ENCODE measurements at regions of chr9 and their contacts with region 1.

Region 1: DNA sequence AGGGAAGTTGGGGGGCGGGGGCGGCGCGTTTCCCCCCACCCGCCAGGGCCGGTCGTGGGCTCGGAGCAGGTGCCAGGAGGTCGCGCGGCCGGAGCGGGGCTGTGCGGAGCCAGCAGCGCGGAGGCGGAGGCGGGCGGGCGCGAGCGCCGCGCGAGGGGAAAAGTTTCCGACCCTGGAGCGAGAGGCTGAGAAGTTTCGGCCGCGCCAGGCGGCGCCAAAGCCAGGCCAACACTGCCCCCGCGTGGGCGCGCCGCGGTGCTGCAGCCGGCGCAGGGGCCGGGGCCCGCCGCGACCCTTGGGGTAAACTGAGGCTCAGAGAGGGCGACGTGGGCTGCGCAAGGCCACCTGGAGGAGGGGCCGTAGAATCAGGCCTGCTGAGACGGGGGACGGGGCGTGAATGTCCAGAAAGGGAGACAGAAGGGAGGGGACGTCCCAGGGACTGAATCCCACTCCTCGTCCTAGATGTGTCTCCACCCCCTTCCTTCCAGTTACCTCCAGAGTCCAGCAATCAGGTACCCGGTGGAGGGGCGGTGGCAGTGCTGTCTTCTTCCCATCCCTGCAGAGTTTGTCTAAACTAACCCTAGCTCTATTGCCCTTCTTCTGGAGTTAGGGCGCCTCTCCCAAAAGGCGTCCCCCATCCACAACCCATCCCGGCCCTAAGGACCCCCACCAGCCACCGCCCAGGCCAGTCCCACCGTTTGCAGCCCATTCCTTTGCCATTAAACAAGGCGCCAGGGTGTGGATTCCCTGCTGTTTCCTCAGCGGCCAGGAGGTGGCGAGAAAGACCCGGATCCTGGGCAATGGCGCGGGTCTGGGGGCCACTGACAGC is 10.2 kb downstream of the C9orf50 start:
- DNase-seq: peak; percentile 75
- H3K4me3 Mint-ChIP-seq: peak overlapping the region; percentile 79
- H3K27ac Mint-ChIP-seq: no peak overlapping the region
- H3K4me1 Mint-ChIP-seq: peaks cover 21% of the 10 kb centered on the region
- H3K27me3 Mint-ChIP-seq: no peaks in the 10 kb centered on the region
- CTCF ChIP-seq: peak; percentile 90

Region 2: DNA sequence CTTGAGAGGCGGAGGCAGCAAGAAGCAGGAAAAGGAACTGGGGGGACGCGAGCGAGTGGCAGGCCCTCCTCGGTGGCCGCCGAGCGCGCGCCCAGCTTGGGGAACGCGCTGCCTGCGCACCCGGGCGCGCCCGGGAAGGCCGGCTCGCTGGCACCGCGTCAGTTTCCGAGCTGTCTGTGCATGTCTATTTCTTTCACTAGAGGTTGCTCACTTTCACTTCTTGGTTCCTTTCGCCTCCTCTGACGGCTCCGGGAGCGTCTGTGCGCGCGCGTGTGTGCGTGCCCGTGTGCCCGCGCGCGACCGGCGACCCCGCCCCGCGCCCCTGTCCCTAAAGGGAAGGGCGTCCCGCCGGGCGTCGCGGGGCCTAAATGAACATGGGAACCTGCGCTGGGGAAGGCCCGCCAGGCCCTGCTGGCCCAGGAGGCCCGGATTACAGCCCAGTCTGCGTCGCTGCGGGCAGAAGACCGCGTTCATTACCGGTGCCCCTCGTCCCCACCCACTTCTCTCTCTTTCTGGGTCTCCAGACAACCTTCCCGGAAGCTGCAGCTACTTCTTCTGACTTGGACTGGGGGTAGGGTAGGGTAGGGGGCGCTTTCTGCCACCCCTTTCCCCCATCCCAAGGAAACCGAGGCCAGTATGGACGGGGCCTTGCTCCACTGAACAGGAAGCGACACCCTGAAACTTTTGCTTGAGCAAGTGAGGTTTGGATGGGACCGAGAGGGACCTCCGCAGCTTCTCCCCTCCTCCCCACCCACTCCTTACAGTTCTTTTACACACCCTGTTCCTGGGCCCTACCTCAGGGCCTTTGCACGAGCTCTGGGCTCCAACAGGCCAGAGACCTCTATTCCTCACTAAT is 226.9 kb before region 1 on chr9:
- CTCF ChIA-PET with region 1: no interaction called
- intact Hi-C with region 1: loop called (anchors 10 kb)
- DNase-seq: peak; percentile 63
- H3K4me3 Mint-ChIP-seq: peak overlapping the region; percentile 66
- H3K27ac Mint-ChIP-seq: peak overlapping the region; percentile 30
- H3K4me1 Mint-ChIP-seq: peaks cover 9% of the 10 kb centered on the region
- H3K27me3 Mint-ChIP-seq: no peaks in the 10 kb centered on the region
- CTCF ChIP-seq: no peak

Region 3: DNA sequence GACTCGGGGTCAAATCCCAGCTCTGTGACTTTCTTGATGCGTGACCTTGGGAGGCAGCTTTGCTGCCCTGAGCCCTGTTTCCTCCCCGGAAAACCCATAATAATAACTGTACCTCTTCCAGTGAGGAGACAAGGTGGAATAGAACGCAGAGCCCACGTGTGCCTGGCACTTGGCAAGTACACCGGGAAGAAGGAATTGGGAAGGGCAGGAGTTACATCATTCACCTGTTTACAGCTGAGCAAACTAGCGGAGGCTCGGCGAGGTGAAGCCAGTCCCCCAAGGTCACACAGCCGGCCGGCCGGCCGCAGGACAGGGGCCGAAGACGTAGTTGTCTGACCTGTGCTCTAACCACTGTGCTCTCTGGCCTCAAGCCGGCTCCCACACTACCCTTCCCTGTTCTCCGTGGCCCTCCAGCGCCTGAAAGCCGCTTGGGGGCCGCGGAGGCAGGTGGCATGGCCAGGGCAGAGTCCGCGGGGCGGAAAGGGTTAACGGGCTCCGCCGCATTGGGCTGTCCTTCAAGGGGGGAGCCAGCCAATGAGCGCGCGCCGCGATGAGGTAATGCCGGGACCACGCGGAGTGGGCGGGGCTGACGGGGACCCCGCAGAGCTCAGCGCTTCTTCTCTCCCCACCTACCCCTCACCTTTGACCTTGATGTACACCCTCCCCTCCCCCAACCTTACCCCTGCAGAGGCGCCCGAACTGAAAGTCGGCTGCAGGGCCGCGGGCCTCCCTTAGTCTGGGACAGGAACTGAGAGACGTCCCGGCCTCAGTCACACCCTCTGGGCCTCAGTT is 115.0 kb before region 1 on chr9:
- CTCF ChIA-PET with region 1: interaction called, 10 read pairs
- intact Hi-C with region 1: loop called (anchors 5 kb)
- DNase-seq: peak; percentile 92
- H3K4me3 Mint-ChIP-seq: peak overlapping the region; percentile 73
- H3K27ac Mint-ChIP-seq: peak overlapping the region; percentile 79
- H3K4me1 Mint-ChIP-seq: peaks cover 54% of the 10 kb centered on the region
- H3K27me3 Mint-ChIP-seq: no peaks in the 10 kb centered on the region
- CTCF ChIP-seq: no peak

Region 4: DNA sequence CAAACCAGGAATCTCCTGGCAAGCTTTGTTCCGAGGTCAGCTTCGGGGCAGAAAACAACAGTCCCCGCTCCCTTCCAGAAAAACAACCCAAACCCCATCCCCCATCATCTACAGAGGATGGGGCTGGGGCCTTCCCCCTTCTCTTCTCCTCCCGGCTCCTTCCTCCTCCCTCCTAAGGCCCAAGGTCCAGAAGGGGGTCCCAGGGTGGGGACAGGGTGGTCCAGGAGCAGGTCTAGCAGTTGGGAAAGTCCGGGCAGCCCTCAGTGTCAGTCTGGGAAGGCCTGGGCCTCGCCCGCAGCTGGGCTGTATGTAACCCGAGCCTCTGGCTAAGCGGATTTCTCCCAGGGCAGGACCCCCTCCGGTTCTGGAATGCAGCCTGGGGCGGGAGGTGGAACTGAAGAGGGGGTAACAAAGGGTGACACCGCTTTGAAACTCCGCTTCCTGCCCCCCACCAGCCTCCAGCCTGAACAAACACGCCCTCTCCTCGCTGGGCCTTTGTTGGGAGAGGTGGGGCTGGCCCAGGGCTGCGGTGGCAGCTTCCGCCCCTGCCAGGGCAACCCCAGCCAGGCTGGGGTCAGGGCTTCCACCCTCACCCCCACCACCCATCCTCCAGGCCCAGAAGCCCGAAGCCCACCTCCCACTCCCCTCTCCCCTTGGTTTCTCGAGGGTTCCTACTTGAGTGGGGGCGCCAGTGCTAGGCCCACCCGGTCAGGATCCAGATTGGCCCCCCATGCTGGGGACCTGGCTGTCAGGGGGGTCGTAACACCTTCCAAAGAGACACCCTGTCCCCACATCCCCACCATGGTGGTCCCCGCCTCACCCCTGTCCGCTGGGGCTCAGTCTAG is 53.3 kb before region 1 on chr9:
- CTCF ChIA-PET with region 1: no interaction called
- intact Hi-C with region 1: no loop called
- DNase-seq: peak; percentile 59
- H3K4me3 Mint-ChIP-seq: no peak overlapping the region
- H3K27ac Mint-ChIP-seq: no peak overlapping the region
- H3K4me1 Mint-ChIP-seq: peaks cover 27% of the 10 kb centered on the region
- H3K27me3 Mint-ChIP-seq: no peaks in the 10 kb centered on the region
- CTCF ChIP-seq: no peak

Measured in Calu3 (cell line).